ENCODE measurements at regions of chr9 and their contacts with region 1.

Region 1: DNA sequence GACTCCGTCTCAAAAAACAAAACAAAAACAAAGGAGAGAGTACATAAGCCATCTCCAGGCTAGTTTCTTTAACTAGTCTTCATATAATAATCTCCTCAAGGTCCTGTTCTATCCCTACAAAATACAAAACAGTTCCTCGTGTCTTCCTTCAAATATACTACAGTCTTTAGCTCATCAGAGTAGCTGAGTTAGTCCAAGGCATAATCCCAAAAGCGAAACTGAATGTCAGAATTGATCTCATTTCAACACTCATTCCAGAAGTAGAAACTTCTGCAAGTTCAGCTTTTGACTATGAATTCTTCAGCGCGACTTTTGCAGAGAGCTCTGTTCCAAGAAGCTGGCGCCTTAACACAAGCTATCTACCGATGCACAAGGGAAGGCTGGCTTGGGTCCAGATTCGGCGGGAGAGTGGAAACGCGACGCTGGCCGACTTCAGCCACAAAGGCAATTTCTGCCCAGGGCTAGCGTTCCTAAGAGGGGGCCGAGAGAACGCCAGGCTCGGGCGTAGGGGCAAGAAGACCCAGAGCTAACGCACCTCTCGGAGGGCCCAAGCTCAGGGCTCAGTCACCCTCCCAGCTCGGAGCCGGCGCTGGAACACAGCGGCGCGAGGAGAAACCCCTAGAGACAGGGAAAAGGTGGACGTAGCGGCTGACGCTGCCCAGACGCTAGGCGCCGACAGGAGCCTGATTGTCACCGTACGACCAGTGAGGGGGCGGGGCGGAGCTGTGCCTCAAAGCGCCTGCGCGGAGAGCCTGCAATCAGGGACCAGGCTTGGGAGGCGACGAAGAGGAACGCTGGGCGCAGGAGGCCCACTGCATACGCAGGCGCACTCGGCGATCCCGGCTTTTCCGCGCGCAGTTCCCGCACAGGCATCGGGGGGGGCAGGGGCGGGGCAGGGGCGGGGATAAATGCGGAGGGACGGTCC is 469 bp upstream of the HSDL2 start:
- DNase-seq: peak; percentile 94
- ATAC-seq: peak; percentile 92
- H3K4me3 ChIP-seq: peak overlapping the region; percentile 88
- H3K27ac ChIP-seq: peak overlapping the region; percentile 95
- H3K4me1 ChIP-seq: peaks cover 17% of the 10 kb centered on the region
- H3K27me3 ChIP-seq: no peaks in the 10 kb centered on the region
- CTCF ChIP-seq: no peak
- EP300 ChIP-seq: no peak
- POLR2A ChIP-seq: peak; percentile 86
- RAD21 ChIP-seq: no peak

Region 2: DNA sequence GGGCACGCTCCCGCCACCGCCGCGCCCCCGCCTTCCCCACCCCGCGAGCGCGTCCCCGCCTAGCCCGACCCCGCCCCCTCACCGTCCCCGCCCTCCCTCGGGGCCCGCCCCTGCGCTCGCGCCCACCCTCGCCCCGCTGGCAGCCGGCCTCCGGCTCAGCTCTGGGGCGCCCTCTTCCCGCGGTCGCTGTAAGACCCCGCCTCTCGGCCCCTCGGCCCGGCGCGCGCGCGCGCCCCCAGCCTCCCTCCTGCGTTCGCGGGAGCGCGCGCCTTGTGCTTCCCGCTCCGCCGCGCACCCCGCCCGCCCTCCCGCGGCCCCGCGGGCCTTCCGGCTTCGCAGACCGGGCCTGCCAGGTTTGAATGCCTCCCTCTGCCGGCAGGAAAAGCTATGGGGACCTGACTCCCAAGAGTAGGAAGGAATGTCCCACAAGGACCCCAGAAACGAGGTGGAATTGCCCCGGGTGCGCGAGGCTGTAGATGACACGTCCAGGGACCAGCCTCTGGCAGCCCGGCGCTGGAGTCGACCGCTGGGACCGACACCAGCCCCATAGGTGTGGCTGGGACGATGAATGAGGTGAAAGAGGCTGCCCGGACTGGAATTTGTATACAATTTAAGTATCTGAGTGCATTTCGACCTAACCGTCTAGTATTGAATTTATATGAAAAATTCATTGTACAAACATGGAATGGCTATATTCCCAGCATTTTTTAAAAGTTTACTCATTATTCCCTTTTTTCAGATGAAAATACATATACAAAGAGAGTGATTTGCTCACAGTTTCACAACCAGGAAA is 45.6 kb before region 1 on chr9:
- CTCF ChIA-PET with region 1: interaction called, 3 read pairs
- POLR2A ChIA-PET with region 1: interaction called, 8 read pairs
- RAD21 ChIA-PET with region 1: interaction called, 9 read pairs
- SMC1A ChIA-PET with region 1: interaction called, 5 read pairs
- in situ Hi-C with region 1: no loop called
- intact Hi-C with region 1: loop called (anchors 5 kb)
- DNase-seq: peak; percentile 57
- ATAC-seq: peak; percentile 80
- H3K4me3 ChIP-seq: peak overlapping the region; percentile 94
- H3K27ac ChIP-seq: peak overlapping the region; percentile 77
- H3K4me1 ChIP-seq: peaks cover 4% of the 10 kb centered on the region; the same call in 1 of the 2 replicates
- H3K27me3 ChIP-seq: no peaks in the 10 kb centered on the region
- CTCF ChIP-seq: peak in 2 of 3 experiments; percentile 18 to 49; a peak in 5 of 6 replicates
- EP300 ChIP-seq: no peak
- POLR2A ChIP-seq: no peak
- RAD21 ChIP-seq: peak; percentile 58

Region 3: GRCh38 chr9:112421771-112422222 is 42.4 kb after region 1 on chr9:
- CTCF ChIA-PET with region 1: no interaction called
- POLR2A ChIA-PET with region 1: no interaction called
- RAD21 ChIA-PET with region 1: no interaction called
- SMC1A ChIA-PET with region 1: no interaction called
- in situ Hi-C with region 1: no loop called
- intact Hi-C with region 1: no loop called
- DNase-seq: no peak
- ATAC-seq: no peak
- H3K4me3 ChIP-seq: no peak overlapping the region
- H3K27ac ChIP-seq: no peak overlapping the region
- H3K4me1 ChIP-seq: no peaks in the 10 kb centered on the region
- H3K27me3 ChIP-seq: no peaks in the 10 kb centered on the region
- CTCF ChIP-seq: no peak
- EP300 ChIP-seq: no peak
- POLR2A ChIP-seq: no peak
- RAD21 ChIP-seq: no peak

Region 4: GRCh38 chr9:112443200-112443599 is 63.8 kb after region 1 on chr9:
- CTCF ChIA-PET with region 1: interaction called, 6 read pairs
- POLR2A ChIA-PET with region 1: no interaction called
- RAD21 ChIA-PET with region 1: no interaction called
- SMC1A ChIA-PET with region 1: interaction called, 3 read pairs
- in situ Hi-C with region 1: no loop called
- intact Hi-C with region 1: loop called (anchors 10 kb)
- DNase-seq: no peak
- ATAC-seq: peak; percentile 61
- H3K4me3 ChIP-seq: no peak overlapping the region
- H3K27ac ChIP-seq: no peak overlapping the region
- H3K4me1 ChIP-seq: peaks cover 4% of the 10 kb centered on the region; the same call in 1 of the 2 replicates
- H3K27me3 ChIP-seq: no peaks in the 10 kb centered on the region
- CTCF ChIP-seq: peak; percentile 57 to 58 (median 58)
- EP300 ChIP-seq: no peak
- POLR2A ChIP-seq: no peak
- RAD21 ChIP-seq: peak; percentile 55

Region 5: DNA sequence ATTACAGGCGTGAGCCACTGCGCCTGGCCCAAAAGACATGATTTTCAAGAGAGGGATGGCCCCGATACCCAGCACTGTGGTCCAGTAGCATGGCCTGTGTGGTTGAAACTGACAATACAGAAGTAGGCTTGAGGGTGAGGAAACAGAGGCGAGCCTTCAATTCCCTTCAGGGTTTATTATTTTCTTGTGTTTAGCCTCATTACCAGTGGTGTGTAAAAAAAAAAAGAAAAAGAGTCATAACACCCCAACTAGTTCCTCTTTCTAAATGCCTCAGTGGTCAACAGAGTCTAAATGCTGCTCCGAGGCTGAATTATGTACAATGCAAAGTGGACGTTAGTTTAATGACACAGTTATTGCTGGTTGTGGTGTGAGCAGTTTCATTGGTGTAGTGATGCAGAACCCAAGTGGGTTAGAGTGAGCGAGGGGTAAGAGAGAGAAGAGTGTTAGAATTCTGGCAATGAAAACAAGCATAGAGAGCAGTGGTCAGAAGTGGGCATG is 430.0 kb after region 1 on chr9:
- CTCF ChIA-PET with region 1: no interaction called
- POLR2A ChIA-PET with region 1: no interaction called
- RAD21 ChIA-PET with region 1: no interaction called
- SMC1A ChIA-PET with region 1: no interaction called
- in situ Hi-C with region 1: no loop called
- intact Hi-C with region 1: loop called (anchors 5 kb)
- DNase-seq: peak; percentile 98
- ATAC-seq: peak; percentile 99
- H3K4me3 ChIP-seq: no peak overlapping the region
- H3K27ac ChIP-seq: no peak overlapping the region
- H3K4me1 ChIP-seq: peaks cover 28% of the 10 kb centered on the region
- H3K27me3 ChIP-seq: peaks cover 0 to 3% of the 10 kb centered on the region in 2 experiments; a peak in 2 of 4 replicates
- CTCF ChIP-seq: no peak
- EP300 ChIP-seq: peak; percentile 91 to 99
- POLR2A ChIP-seq: no peak
- RAD21 ChIP-seq: 0 out of 2 replicates have a peak, but pooled peaks have one; percentile 5